GM12878 (cell line): ENCODE measurements at regions of chr17 and their contacts with region 1.

Region 1: GRCh38 chr17:65198653-65199382 is 61.6 kb downstream of the RGS9 start:
- DNase-seq: peak; percentile 38
- ATAC-seq: peak; percentile 78
- H3K4me3 ChIP-seq: no peak overlapping the region
- H3K27ac ChIP-seq: no peak overlapping the region
- H3K4me1 ChIP-seq: no peaks in the 10 kb centered on the region
- H3K27me3 ChIP-seq: no peaks in the 10 kb centered on the region
- CTCF ChIP-seq: peak; percentile 48 to 85 (median 65)
- EP300 ChIP-seq: no peak
- POLR2A ChIP-seq: no peak
- RAD21 ChIP-seq: peak; percentile 91

Region 2: DNA sequence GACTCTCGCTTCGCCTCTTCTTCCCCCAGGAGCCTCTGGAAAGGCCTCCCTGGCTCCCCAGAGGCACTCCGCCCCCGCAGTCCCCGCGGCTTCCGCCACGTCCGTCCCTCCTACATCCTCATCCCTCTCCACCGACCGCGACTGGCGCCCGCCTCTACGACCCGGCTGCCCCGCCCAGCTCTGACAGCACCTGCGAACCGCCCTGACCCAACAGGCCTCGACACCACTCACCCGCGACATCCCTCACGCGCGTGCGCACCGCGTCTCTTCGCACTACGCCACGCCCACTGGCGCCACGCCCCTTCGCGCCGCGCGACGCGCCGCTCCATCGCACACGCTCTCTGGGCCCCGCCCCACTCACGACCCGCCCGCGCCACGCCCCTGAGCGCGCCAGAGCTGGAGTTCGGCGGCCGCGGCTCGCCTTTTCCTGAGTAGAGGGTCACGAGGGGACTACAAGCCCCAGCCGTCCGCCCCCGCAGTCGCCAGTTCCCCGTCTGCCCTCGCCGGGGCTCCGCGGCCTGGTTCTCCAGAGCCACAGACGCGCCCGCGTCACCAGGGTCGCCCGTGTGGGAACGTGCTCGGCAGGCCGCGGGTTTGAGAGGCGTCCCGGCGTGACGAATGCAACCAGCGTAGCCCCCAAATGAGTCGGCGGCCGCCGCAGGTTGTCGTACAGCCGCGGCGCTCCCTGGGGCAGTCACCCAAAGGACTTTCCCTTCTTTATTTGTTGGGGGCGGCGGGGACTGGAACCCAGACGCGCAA is 223.3 kb before region 1 on chr17:
- CTCF ChIA-PET with region 1: no interaction called
- POLR2A ChIA-PET with region 1: no interaction called
- RAD21 ChIA-PET with region 1: no interaction called
- SMC1A ChIA-PET with region 1: no interaction called
- in situ Hi-C with region 1: no loop called
- intact Hi-C with region 1: loop called (anchors 5 kb)
- DNase-seq: peak; percentile 95
- ATAC-seq: peak; percentile 87
- H3K4me3 ChIP-seq: peak overlapping the region; percentile 85
- H3K27ac ChIP-seq: peak overlapping the region; percentile 93
- H3K4me1 ChIP-seq: peaks cover 31% of the 10 kb centered on the region
- H3K27me3 ChIP-seq: no peaks in the 10 kb centered on the region
- CTCF ChIP-seq: no peak
- EP300 ChIP-seq: peak; percentile 59 to 64; a peak in 2 of 4 replicates
- POLR2A ChIP-seq: peak; percentile 83
- RAD21 ChIP-seq: no peak

Region 3: DNA sequence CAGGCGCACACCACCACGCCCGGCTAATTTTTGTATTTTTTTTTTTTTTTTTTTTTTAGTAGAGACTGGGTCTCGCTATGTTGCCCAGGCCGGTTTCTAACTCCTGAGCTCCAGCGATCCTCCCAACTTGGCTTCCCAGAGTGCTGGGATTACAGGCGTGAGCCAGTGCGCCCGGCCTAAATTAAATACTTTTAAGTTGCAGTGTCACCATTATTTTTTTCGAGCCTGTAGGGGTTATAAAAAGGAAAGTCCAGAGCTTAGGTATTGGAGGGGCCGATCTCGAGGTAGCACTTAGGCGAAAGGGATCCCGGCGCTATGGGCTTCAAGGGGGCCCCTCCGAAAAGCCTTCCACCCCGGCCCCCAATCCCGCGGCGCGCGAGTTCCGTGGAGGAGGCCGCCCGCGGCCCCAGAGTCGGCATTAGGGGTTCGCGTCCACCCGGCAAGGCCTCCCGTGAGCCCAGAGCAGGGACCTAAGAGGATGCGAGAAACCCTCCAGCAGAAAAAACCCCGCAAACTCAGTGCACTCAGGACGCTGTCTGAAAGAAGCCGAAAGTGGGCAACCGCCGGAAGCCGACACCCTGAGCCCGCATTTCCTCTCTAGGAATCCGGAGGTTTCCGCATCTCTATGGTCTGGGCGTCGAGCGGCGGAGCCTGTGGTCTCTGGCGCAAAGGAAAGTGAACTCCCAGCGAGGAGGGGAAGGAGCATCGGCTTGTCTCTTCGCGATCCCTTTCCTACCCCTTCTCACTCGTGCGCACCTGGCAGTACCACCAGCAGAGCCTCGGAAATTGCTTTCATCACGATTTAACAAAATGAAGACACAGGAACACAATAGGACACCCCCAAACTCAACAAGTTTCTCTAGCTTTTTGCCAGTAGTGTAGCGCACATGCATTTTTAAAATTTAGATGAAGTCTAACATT is 75.7 kb before region 1 on chr17:
- CTCF ChIA-PET with region 1: no interaction called
- POLR2A ChIA-PET with region 1: no interaction called
- RAD21 ChIA-PET with region 1: interaction called, 3 read pairs
- SMC1A ChIA-PET with region 1: no interaction called
- in situ Hi-C with region 1: no loop called
- intact Hi-C with region 1: loop called (anchors 5 kb)
- DNase-seq: peak; percentile 66
- ATAC-seq: peak; percentile 77
- H3K4me3 ChIP-seq: peak overlapping the region; percentile 60
- H3K27ac ChIP-seq: peak overlapping the region; percentile 73
- H3K4me1 ChIP-seq: peaks cover 20% of the 10 kb centered on the region
- H3K27me3 ChIP-seq: no peaks in the 10 kb centered on the region
- CTCF ChIP-seq: no peak
- EP300 ChIP-seq: no peak
- POLR2A ChIP-seq: peak; percentile 90
- RAD21 ChIP-seq: no peak

Region 4: GRCh38 chr17:65154770-65155621 is 43.8 kb before region 1 on chr17:
- CTCF ChIA-PET with region 1: interaction called, 12 read pairs
- POLR2A ChIA-PET with region 1: no interaction called
- RAD21 ChIA-PET with region 1: interaction called, 6 read pairs
- SMC1A ChIA-PET with region 1: no interaction called
- in situ Hi-C with region 1: no loop called
- intact Hi-C with region 1: no loop called
- DNase-seq: no peak
- ATAC-seq: peak; percentile 96
- H3K4me3 ChIP-seq: peak overlapping the region; percentile 9; the same call in 1 of the 2 replicates
- H3K27ac ChIP-seq: peak overlapping the region; percentile 70
- H3K4me1 ChIP-seq: peaks cover 19% of the 10 kb centered on the region
- H3K27me3 ChIP-seq: no peaks in the 10 kb centered on the region
- CTCF ChIP-seq: no peak
- EP300 ChIP-seq: no peak; a peak in 1 of 4 replicates
- POLR2A ChIP-seq: no peak
- RAD21 ChIP-seq: no peak